ENCODE measurements at regions of chr20 and their contacts with region 1.

Region 1: GRCh38 chr20:50750145-50750671 is 18.8 kb downstream of the PARD6B start:
- DNase-seq: no peak
- H3K4me3 Mint-ChIP-seq: no peak overlapping the region
- H3K27ac Mint-ChIP-seq: no peak overlapping the region
- H3K4me1 Mint-ChIP-seq: peaks cover 26% of the 10 kb centered on the region
- H3K27me3 Mint-ChIP-seq: no peaks in the 10 kb centered on the region

Region 2: GRCh38 chr20:50427740-50428462 is 322.3 kb before region 1 on chr20:
- CTCF ChIA-PET with region 1: no interaction called
- intact Hi-C with region 1: no loop called
- DNase-seq: peak; percentile 14
- H3K4me3 Mint-ChIP-seq: no peak overlapping the region
- H3K27ac Mint-ChIP-seq: no peak overlapping the region
- H3K4me1 Mint-ChIP-seq: no peaks in the 10 kb centered on the region
- H3K27me3 Mint-ChIP-seq: peaks cover 1% of the 10 kb centered on the region

Region 3: GRCh38 chr20:50588034-50588611 is 162.1 kb before region 1 on chr20:
- CTCF ChIA-PET with region 1: interaction called, 5 read pairs
- intact Hi-C with region 1: loop called (anchors 2 kb)
- DNase-seq: peak; percentile 88
- H3K4me3 Mint-ChIP-seq: no peak overlapping the region
- H3K27ac Mint-ChIP-seq: peak overlapping the region; percentile 65
- H3K4me1 Mint-ChIP-seq: no peaks in the 10 kb centered on the region
- H3K27me3 Mint-ChIP-seq: no peaks in the 10 kb centered on the region

Region 4: GRCh38 chr20:50635667-50636503 is 114.3 kb before region 1 on chr20:
- CTCF ChIA-PET with region 1: interaction called, 18 read pairs
- intact Hi-C with region 1: no loop called
- DNase-seq: peak; percentile 72
- H3K4me3 Mint-ChIP-seq: no peak overlapping the region
- H3K27ac Mint-ChIP-seq: no peak overlapping the region
- H3K4me1 Mint-ChIP-seq: no peaks in the 10 kb centered on the region
- H3K27me3 Mint-ChIP-seq: no peaks in the 10 kb centered on the region

Region 5: DNA sequence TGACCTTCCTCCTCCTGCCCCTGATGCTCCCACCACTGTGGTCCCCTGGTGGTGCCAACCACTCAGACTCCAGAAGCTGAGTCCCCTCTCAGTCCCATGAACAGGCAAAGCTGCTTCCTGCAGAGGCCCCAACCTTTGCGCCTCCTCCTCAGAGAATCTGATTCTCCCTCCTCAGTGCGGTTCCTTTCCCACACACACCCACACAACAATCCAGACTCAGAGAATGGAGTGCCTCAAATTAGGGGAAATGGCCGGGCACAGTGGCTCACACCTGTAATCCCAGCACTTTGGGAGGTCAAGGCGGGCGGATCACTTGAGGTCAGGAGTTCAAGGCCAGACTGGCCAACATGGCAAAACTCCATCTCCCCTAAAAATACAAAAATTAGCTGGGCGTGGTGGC is 81.9 kb before region 1 on chr20:
- CTCF ChIA-PET with region 1: interaction called, 18 read pairs
- intact Hi-C with region 1: loop called (anchors 1 kb)
- DNase-seq: no peak
- H3K4me3 Mint-ChIP-seq: no peak overlapping the region
- H3K27ac Mint-ChIP-seq: no peak overlapping the region
- H3K4me1 Mint-ChIP-seq: no peaks in the 10 kb centered on the region
- H3K27me3 Mint-ChIP-seq: no peaks in the 10 kb centered on the region

Region 6: DNA sequence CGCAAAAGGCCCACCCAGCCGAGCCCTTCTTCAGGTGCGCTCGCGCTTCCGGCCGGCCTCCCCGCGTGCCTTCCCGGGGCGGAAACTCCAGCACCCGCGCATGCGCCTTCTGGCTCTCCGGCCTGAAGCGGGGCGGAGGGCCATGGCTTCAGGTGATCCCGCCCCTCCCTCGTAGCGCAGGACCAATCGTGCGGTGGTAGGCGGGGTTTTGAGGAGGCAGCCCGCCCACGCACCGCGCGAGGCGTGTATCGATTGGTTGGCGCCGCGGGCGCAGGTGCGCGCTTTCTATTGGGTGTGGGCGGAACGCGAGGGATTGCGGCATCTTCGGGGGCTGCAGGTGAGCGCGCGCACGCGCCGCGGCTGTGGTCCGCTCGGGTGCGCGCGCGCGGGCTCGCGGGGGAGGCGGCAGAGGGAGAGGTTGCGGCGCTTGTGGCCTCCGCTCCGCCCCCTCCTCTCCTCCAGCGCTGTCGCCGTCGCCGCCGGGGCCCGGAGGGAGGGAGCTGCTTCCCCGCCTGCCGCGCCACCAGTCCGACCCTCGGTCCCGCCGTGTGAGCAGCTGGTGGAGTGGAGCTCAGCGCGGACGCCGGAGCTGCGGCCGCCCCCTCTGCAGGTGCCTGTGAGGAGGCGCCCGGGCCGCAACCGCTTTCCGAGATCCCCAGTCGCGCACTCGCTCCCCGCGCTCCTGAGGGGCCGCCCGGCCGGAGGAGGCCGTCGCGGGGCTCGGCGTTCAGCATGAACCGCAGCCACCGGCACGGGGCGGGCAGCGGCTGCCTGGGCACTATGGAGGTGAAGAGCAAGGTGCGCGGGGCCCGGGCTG is 18.9 kb before region 1 on chr20 and contains the start of gene PARD6B:
- CTCF ChIA-PET with region 1: interaction called, 13 read pairs
- intact Hi-C with region 1: no loop called
- DNase-seq: peak; percentile 100
- H3K4me3 Mint-ChIP-seq: peak within 1 kb of the TSS; percentile 86
- H3K27ac Mint-ChIP-seq: peak within 1 kb of the TSS; percentile 70
- H3K4me1 Mint-ChIP-seq: peaks cover 45% of the 10 kb centered on the region
- H3K27me3 Mint-ChIP-seq: no peaks in the 10 kb centered on the region
- total RNA-seq, gene PARD6B: 3.3 to 3.9 TPM

Measured in activated naive CD4-positive, alpha-beta T cell treated with anti-CD3 and anti-CD28 coated beads for 36 hours (primary cell).